CD4-positive, alpha-beta memory T cell (primary cell): ENCODE measurements at regions of chr19 and their contacts with region 1.

Region 1: GRCh38 chr19:46614114-46614722 is 10.7 kb downstream of the PTGIR start:
- DNase-seq: peak; percentile 70 to 75 (median 71)
- H3K4me3 ChIP-seq: no peak overlapping the region
- H3K4me3 Mint-ChIP-seq: peak overlapping the region in 7 of 8 donors; percentile 36 to 75 (median 52)
- H3K27ac ChIP-seq: no peak overlapping the region
- H3K27ac Mint-ChIP-seq: peak overlapping the region; percentile 76 to 93 (median 83)
- H3K4me1 ChIP-seq: peaks cover 80% of the 10 kb centered on the region
- H3K4me1 Mint-ChIP-seq: peaks cover 45 to 75% (median 60%) of the 10 kb centered on the region in 4 donors
- H3K27me3 ChIP-seq: no peaks in the 10 kb centered on the region
- H3K27me3 Mint-ChIP-seq: no peaks in the 10 kb centered on the region

Region 2: DNA sequence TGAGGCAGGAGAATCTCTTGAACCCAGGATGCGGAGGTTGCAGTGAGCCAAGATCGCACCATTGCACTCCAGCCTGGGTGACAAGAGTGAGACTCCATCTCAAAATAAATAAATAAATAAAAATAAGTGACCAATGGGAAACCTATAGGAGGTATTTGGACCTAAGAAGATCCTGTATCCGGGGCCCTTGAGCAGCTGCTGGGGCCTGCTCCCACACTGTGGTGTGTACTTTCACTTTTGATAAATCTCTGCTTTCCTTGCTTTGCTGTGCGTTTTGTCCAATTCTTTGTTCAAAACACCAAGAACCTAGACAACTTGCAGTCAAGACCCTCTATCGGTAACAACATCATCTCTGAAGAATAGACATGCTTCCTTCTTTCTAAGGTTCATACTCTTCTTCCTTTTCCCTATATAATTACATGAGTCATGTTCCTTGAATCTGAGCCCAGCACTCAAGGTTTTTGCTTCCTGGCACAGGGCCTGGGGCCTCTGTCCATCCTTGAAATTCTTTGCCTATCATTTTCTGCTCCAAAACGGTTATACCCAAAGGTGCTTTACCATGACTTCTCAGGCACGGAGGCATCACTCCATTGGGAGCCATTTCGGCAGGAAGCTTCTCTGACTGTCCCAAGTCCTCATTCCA is 171.3 kb before region 1 on chr19:
- CTCF ChIA-PET with region 1: no interaction called
- POLR2A ChIA-PET with region 1: no interaction called
- intact Hi-C with region 1: no loop called
- DNase-seq: no peak
- H3K4me3 ChIP-seq: no peak overlapping the region
- H3K4me3 Mint-ChIP-seq: no peak overlapping the region
- H3K27ac ChIP-seq: no peak overlapping the region
- H3K27ac Mint-ChIP-seq: peak overlapping the region in 3 of 7 donors; percentile 51 to 59 (median 54)
- H3K4me1 ChIP-seq: no peaks in the 10 kb centered on the region
- H3K4me1 Mint-ChIP-seq: peaks cover 0 to 4% (median 3%) of the 10 kb centered on the region in 4 donors
- H3K27me3 ChIP-seq: no peaks in the 10 kb centered on the region
- H3K27me3 Mint-ChIP-seq: peaks cover 0 to 9% of the 10 kb centered on the region in 2 donors

Region 3: DNA sequence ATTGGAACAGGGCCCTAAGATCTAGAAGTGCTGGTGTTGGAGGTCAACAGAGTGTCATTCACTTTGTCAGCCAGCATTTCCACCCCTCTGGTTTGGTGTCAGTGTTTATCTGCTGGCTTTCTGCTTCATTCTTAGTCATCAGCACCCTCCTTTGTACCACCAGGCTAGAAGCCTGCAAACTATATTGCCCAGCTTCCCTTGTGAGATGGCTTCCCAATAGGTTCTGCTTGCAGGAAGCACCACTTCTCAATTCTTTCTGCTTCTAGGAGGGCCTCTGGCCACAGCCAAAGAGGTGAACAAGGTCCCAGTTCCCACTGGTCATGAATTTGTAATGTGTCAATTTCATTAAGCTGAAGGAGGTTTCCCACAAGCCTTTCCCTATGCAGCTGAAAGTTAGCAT is 49.5 kb before region 1 on chr19:
- CTCF ChIA-PET with region 1: no interaction called
- POLR2A ChIA-PET with region 1: no interaction called
- intact Hi-C with region 1: no loop called
- DNase-seq: no peak
- H3K4me3 ChIP-seq: no peak overlapping the region
- H3K4me3 Mint-ChIP-seq: no peak overlapping the region
- H3K27ac ChIP-seq: no peak overlapping the region
- H3K27ac Mint-ChIP-seq: no peak overlapping the region
- H3K4me1 ChIP-seq: no peaks in the 10 kb centered on the region
- H3K4me1 Mint-ChIP-seq: peaks cover 0 to 5% (median 3%) of the 10 kb centered on the region in 4 donors
- H3K27me3 ChIP-seq: no peaks in the 10 kb centered on the region
- H3K27me3 Mint-ChIP-seq: no peaks in the 10 kb centered on the region

Region 4: GRCh38 chr19:46600384-46601317 is 13.6 kb before region 1 on chr19:
- CTCF ChIA-PET with region 1: interaction called, 77 read pairs
- POLR2A ChIA-PET with region 1: interaction called, 301 read pairs
- intact Hi-C with region 1: loop called (anchors 1 kb)
- DNase-seq: peak; percentile 97 to 99 (median 98)
- H3K4me3 ChIP-seq: peak overlapping the region; percentile 80 to 90
- H3K4me3 Mint-ChIP-seq: peak overlapping the region; percentile 98 to 99 (median 99)
- H3K27ac ChIP-seq: peak overlapping the region; percentile 97
- H3K27ac Mint-ChIP-seq: peak overlapping the region; percentile 100
- H3K4me1 ChIP-seq: peaks cover 36% of the 10 kb centered on the region
- H3K4me1 Mint-ChIP-seq: peaks cover 10 to 46% (median 30%) of the 10 kb centered on the region in 4 donors
- H3K27me3 ChIP-seq: no peaks in the 10 kb centered on the region
- H3K27me3 Mint-ChIP-seq: peaks cover 0 to 4% of the 10 kb centered on the region in 2 donors

Region 5: GRCh38 chr19:46634045-46634655 is 19.9 kb after region 1 on chr19:
- CTCF ChIA-PET with region 1: interaction called, 62 read pairs
- POLR2A ChIA-PET with region 1: interaction called, 13 read pairs
- intact Hi-C with region 1: loop called (anchors 1 kb)
- DNase-seq: peak; percentile 93 to 98 (median 94)
- H3K4me3 ChIP-seq: peak overlapping the region; percentile 61 to 64
- H3K4me3 Mint-ChIP-seq: peak overlapping the region; percentile 68 to 88 (median 81)
- H3K27ac ChIP-seq: peak overlapping the region; percentile 57
- H3K27ac Mint-ChIP-seq: peak overlapping the region; percentile 87 to 94 (median 93)
- H3K4me1 ChIP-seq: peaks cover 33% of the 10 kb centered on the region
- H3K4me1 Mint-ChIP-seq: peaks cover 14 to 28% (median 22%) of the 10 kb centered on the region in 4 donors
- H3K27me3 ChIP-seq: no peaks in the 10 kb centered on the region
- H3K27me3 Mint-ChIP-seq: peaks cover 0 to 1% of the 10 kb centered on the region in 2 donors

Region 6: DNA sequence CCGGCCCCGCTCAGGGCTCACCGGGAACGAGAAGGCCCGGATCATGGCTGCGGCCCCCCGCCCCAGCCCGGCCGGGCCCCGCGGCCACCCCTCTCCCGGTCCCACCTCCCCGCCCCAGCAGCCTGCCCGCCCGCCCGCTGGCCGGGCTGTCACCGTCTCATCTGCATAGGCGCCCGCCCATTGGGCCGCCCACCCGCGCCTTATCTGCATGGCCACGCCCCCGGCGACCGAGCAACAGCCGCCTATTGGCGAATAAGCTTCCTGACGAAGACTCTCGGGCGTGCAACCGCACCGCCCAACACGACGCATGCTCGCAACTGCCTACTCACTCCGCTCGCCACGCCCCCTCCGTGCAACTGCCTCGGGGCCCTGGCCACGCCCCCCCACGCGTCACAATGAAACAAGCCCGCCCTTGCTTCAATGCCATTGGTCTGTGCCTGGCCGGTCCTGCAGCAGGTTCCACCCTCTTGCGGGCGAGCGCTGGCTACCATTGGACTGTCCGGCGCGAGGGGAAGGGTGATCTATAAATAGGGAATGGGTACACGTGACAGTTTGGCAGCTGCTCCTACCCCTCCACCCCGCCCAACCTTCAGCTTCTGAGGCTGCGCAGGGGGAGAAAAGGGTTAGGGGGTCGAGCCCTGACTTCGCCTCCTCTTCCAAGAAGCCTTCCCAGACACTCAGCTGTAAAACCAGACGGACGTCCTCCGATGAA is 47.0 kb after region 1 on chr19 and contains the start of gene DACT3:
- CTCF ChIA-PET with region 1: interaction called, 188 read pairs
- POLR2A ChIA-PET with region 1: interaction called, 43 read pairs
- intact Hi-C with region 1: loop called (anchors 1 kb)
- DNase-seq: peak; percentile 99 to 100 (median 99)
- H3K4me3 ChIP-seq: peak within 1 kb of the TSS; percentile 48 to 64
- H3K4me3 Mint-ChIP-seq: peak within 1 kb of the TSS; percentile 82 to 88 (median 84)
- H3K27ac ChIP-seq: peak within 1 kb of the TSS; percentile 44
- H3K27ac Mint-ChIP-seq: peak within 1 kb of the TSS; percentile 76 to 97 (median 91)
- H3K4me1 ChIP-seq: peaks cover 27% of the 10 kb centered on the region
- H3K4me1 Mint-ChIP-seq: peaks cover 10 to 31% (median 15%) of the 10 kb centered on the region in 4 donors
- H3K27me3 ChIP-seq: peaks cover 18% of the 10 kb centered on the region
- H3K27me3 Mint-ChIP-seq: peaks cover 10 to 19% of the 10 kb centered on the region in 2 donors
- total RNA-seq, gene DACT3: not detected

Region 7: GRCh38 chr19:46717034-46717723 is 103.0 kb after region 1 on chr19 and contains the start of gene PRKD2:
- CTCF ChIA-PET with region 1: interaction called, 10 read pairs
- POLR2A ChIA-PET with region 1: interaction called, 19 read pairs
- intact Hi-C with region 1: loop called (anchors 5 kb)
- DNase-seq: peak; percentile 76 to 85 (median 79)
- H3K4me3 ChIP-seq: peak within 1 kb of the TSS; percentile 82 to 94
- H3K4me3 Mint-ChIP-seq: peak within 1 kb of the TSS; percentile 93 to 98 (median 94)
- H3K27ac ChIP-seq: peak within 1 kb of the TSS; percentile 95
- H3K27ac Mint-ChIP-seq: peak within 1 kb of the TSS; percentile 97 to 99 (median 98)
- H3K4me1 ChIP-seq: peaks cover 44% of the 10 kb centered on the region
- H3K4me1 Mint-ChIP-seq: peaks cover 23 to 64% (median 37%) of the 10 kb centered on the region in 4 donors
- H3K27me3 ChIP-seq: no peaks in the 10 kb centered on the region
- H3K27me3 Mint-ChIP-seq: no peaks in the 10 kb centered on the region
- total RNA-seq, gene PRKD2: 115 to 122 TPM

Region 8: DNA sequence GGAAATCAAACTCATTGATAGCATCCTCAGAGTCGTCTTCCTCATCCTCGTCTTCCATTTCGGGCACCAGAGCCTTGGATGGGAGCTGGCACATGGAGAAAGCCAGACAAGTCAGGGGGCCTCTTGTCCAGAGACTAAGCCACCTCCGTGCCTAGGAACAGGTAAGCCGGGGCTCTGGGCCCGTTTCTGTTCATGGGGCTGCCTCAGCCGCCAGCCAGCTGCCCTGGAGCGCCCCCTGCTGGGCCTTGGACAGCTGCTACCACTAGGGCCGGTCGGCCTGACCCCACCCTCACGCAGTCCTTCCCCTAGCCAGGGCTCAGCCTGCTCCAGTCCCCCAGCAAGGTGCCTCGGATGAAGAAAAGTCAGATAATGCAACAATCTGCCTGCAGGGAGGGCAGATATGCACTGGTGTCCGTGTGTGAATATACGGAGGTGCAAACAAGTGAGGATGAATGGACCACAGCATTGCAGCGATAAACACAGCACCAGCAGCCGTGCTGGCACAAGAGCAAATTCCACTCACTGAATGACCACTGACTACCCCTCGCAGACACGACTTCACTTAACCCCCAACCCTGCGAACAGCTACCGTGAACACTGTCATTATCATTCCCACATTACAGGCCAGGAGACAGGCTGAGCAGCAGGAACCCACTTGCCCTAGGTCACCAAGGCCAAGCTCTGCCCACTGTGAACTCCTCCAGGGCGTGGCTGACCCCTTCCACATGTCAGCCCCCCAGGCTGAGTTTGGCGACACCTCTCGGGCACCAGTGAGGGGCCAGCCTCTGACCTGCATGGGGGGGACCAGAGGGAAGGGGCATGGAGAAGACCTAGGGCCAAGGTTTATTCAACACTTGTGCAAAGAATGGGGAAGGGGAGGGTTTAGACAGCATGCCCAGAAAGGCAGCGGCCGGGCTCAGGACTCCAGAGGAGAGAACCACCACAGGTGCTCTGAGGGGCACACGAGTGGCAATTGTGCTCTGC is 114.8 kb after region 1 on chr19:
- CTCF ChIA-PET with region 1: interaction called, 11 read pairs
- POLR2A ChIA-PET with region 1: no interaction called
- intact Hi-C with region 1: no loop called
- DNase-seq: peak; percentile 77 to 82 (median 78)
- H3K4me3 ChIP-seq: no peak overlapping the region
- H3K4me3 Mint-ChIP-seq: peak overlapping the region in 1 of 8 donors; percentile 1
- H3K27ac ChIP-seq: no peak overlapping the region
- H3K27ac Mint-ChIP-seq: peak overlapping the region in 4 of 7 donors; percentile 25 to 78 (median 56)
- H3K4me1 ChIP-seq: peaks cover 9% of the 10 kb centered on the region
- H3K4me1 Mint-ChIP-seq: peaks cover 8 to 10% (median 9%) of the 10 kb centered on the region in 4 donors
- H3K27me3 ChIP-seq: no peaks in the 10 kb centered on the region
- H3K27me3 Mint-ChIP-seq: no peaks in the 10 kb centered on the region

Region 9: GRCh38 chr19:46746281-46747013 is 132.2 kb after region 1 on chr19 and contains the start of gene STRN4:
- CTCF ChIA-PET with region 1: interaction called, 5 read pairs
- POLR2A ChIA-PET with region 1: no interaction called
- intact Hi-C with region 1: loop called (anchors 5 kb)
- DNase-seq: peak; percentile 49 to 74 (median 52)
- H3K4me3 ChIP-seq: peak within 1 kb of the TSS; percentile 54 to 80
- H3K4me3 Mint-ChIP-seq: peak within 1 kb of the TSS; percentile 88 to 94 (median 90)
- H3K27ac ChIP-seq: peak within 1 kb of the TSS; percentile 76
- H3K27ac Mint-ChIP-seq: peak within 1 kb of the TSS; percentile 92 to 96 (median 95)
- H3K4me1 ChIP-seq: peaks cover 35% of the 10 kb centered on the region
- H3K4me1 Mint-ChIP-seq: peaks cover 35 to 64% (median 49%) of the 10 kb centered on the region in 4 donors
- H3K27me3 ChIP-seq: no peaks in the 10 kb centered on the region
- H3K27me3 Mint-ChIP-seq: no peaks in the 10 kb centered on the region
- total RNA-seq, gene STRN4: 81.2 to 88.8 TPM

Region 10: GRCh38 chr19:46890423-46891170 is 276.4 kb after region 1 on chr19:
- CTCF ChIA-PET with region 1: no interaction called
- POLR2A ChIA-PET with region 1: no interaction called
- intact Hi-C with region 1: no loop called
- DNase-seq: no peak
- H3K4me3 ChIP-seq: no peak overlapping the region
- H3K4me3 Mint-ChIP-seq: no peak overlapping the region
- H3K27ac ChIP-seq: no peak overlapping the region
- H3K27ac Mint-ChIP-seq: peak overlapping the region in 1 of 7 donors; percentile 1
- H3K4me1 ChIP-seq: peaks cover 25% of the 10 kb centered on the region
- H3K4me1 Mint-ChIP-seq: peaks cover 44 to 73% (median 55%) of the 10 kb centered on the region in 4 donors
- H3K27me3 ChIP-seq: no peaks in the 10 kb centered on the region
- H3K27me3 Mint-ChIP-seq: no peaks in the 10 kb centered on the region